GM12878 (cell line): ENCODE measurements at regions of chr7 and their contacts with region 1.

Region 1: GRCh38 chr7:128135515-128136214 is 104.4 kb upstream of the LRRC4 start:
- DNase-seq: no peak
- ATAC-seq: peak; percentile 98
- H3K4me3 ChIP-seq: peak overlapping the region; percentile 61
- H3K27ac ChIP-seq: no peak overlapping the region
- H3K4me1 ChIP-seq: peaks cover 4% of the 10 kb centered on the region
- H3K27me3 ChIP-seq: peaks cover 9% of the 10 kb centered on the region in 2 experiments
- CTCF ChIP-seq: peak; percentile 72 to 89 (median 75)
- EP300 ChIP-seq: no peak
- POLR2A ChIP-seq: no peak; the same call in 1 of the 2 replicates
- RAD21 ChIP-seq: peak; percentile 69

Region 2: DNA sequence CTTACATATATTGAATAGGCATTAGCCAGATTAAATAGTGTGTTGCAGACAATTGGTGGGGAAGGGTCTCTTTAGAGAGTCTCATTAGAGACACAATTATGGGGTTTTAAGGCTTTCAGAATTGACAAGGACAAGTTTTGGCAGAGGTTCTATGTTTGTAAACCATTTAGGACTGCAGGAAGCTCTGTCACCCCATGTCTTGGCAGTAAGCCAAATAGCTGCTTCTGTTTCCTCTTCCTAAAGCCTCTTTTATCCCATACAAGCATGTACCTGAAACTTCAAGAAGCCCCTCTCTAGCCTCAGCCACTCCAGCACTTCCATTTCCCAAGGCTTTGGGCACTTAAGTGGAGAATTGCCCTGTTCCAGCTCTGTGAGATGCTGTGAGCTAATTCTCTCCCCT is 82.6 kb before region 1 on chr7:
- CTCF ChIA-PET with region 1: no interaction called
- POLR2A ChIA-PET with region 1: no interaction called
- RAD21 ChIA-PET with region 1: no interaction called
- SMC1A ChIA-PET with region 1: no interaction called
- in situ Hi-C with region 1: no loop called
- intact Hi-C with region 1: no loop called
- DNase-seq: no peak
- ATAC-seq: no peak
- H3K4me3 ChIP-seq: no peak overlapping the region
- H3K27ac ChIP-seq: no peak overlapping the region
- H3K4me1 ChIP-seq: no peaks in the 10 kb centered on the region
- H3K27me3 ChIP-seq: no peaks in the 10 kb centered on the region
- CTCF ChIP-seq: no peak
- EP300 ChIP-seq: no peak
- POLR2A ChIP-seq: no peak
- RAD21 ChIP-seq: no peak

Region 3: DNA sequence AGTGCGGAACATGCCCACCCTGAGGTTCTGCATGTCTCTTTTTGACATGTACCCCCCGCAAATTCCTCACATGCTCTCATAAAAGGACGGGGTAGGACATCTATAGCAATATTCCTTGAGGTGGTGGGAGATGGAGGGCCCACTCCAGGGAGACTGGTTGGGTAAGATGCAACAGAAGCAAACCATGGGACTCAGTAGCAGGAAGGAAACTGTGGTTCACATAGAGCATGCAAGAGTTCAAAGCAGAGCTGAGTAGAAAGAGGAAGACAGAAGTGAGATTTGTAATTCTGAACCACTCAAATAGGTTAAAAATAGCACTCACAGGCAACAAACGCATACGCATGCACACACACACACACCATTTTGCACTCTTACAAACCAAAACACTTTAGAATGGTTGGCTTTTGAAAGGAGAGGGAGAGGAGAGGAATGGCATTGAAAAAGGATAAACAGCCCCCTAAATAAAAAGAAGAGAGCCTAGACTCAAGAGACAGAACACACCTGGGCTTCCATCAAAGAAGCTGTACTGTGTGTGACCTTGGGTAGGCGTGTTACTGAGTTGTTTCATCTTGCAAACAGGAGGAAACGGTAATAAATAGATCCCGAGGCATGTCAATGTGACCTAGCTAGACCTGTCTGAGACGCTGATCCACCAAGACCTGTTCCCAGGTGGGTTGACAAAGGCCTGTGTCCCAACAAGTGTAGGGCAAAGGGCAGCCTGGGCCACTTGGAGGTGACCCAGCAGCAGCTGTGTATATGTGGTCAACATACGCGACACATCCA is 26.8 kb before region 1 on chr7:
- CTCF ChIA-PET with region 1: interaction called, 28 read pairs
- POLR2A ChIA-PET with region 1: no interaction called
- RAD21 ChIA-PET with region 1: interaction called, 5 read pairs
- SMC1A ChIA-PET with region 1: interaction called, 8 read pairs
- in situ Hi-C with region 1: no loop called
- intact Hi-C with region 1: no loop called
- DNase-seq: peak; percentile 78
- ATAC-seq: peak; percentile 82
- H3K4me3 ChIP-seq: peak overlapping the region; percentile 16; the same call in 1 of the 2 replicates
- H3K27ac ChIP-seq: peak overlapping the region; percentile 73
- H3K4me1 ChIP-seq: peaks cover 30% of the 10 kb centered on the region
- H3K27me3 ChIP-seq: no peaks in the 10 kb centered on the region
- CTCF ChIP-seq: no peak
- EP300 ChIP-seq: peak; percentile 57 to 73; a peak in 2 of 4 replicates
- POLR2A ChIP-seq: no peak
- RAD21 ChIP-seq: no peak